ENCODE measurements at regions of chr3 and their contacts with region 1.

Region 1: GRCh38 chr3:133661454-133662277 is at the start of gene TOPBP1:
- DNase-seq: peak; percentile 85 to 87
- H3K4me3 ChIP-seq: peak within 1 kb of the TSS; percentile 78
- H3K4me3 Mint-ChIP-seq: peak within 1 kb of the TSS; percentile 80
- H3K27ac Mint-ChIP-seq: peak within 1 kb of the TSS; percentile 80
- H3K4me1 ChIP-seq: peaks cover 24% of the 10 kb centered on the region
- H3K4me1 Mint-ChIP-seq: peaks cover 15% of the 10 kb centered on the region
- H3K27me3 ChIP-seq: no peaks in the 10 kb centered on the region
- H3K27me3 Mint-ChIP-seq: no peaks in the 10 kb centered on the region
- CTCF ChIP-seq: no peak
- total RNA-seq, gene TOPBP1: 57.1 and 68.2 TPM in 2 replicates

Region 2: DNA sequence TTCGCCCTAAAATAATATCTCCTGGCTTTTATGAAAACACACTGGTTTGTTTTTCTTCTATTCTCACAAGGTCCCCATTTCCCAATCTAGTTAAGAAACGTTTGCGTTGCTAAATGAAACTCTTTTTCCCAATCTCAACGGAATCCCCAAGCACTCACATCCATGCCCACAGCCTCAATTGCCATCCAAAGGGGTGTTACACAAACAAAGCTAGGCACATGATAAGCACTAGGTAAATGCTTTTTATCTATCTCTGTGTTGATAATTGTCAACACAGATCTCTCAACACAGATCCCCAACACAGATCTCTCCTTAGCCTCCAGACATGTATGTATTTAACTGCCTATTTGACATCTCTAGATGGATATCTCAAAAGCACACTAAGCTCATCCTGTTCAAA is 49.4 kb after region 1 on chr3:
- CTCF ChIA-PET with region 1: no interaction called
- POLR2A ChIA-PET with region 1: no interaction called
- intact Hi-C with region 1: loop called (anchors 2 kb)
- DNase-seq: peak in 1 of 2 experiments; percentile 55
- H3K4me3 ChIP-seq: no peak overlapping the region
- H3K4me3 Mint-ChIP-seq: peak overlapping the region; percentile 10
- H3K27ac Mint-ChIP-seq: no peak overlapping the region
- H3K4me1 ChIP-seq: no peaks in the 10 kb centered on the region
- H3K4me1 Mint-ChIP-seq: peaks cover 19% of the 10 kb centered on the region
- H3K27me3 ChIP-seq: no peaks in the 10 kb centered on the region
- H3K27me3 Mint-ChIP-seq: no peaks in the 10 kb centered on the region
- CTCF ChIP-seq: no peak

Region 3: GRCh38 chr3:133742351-133743091 is 80.9 kb after region 1 on chr3:
- CTCF ChIA-PET with region 1: no interaction called
- POLR2A ChIA-PET with region 1: no interaction called
- intact Hi-C with region 1: loop called (anchors 2 kb)
- DNase-seq: peak; percentile 46 to 62
- H3K4me3 ChIP-seq: no peak overlapping the region
- H3K4me3 Mint-ChIP-seq: no peak overlapping the region
- H3K27ac Mint-ChIP-seq: no peak overlapping the region
- H3K4me1 ChIP-seq: peaks cover 16% of the 10 kb centered on the region; the same call in 1 of the 2 replicates
- H3K4me1 Mint-ChIP-seq: peaks cover 7% of the 10 kb centered on the region
- H3K27me3 ChIP-seq: no peaks in the 10 kb centered on the region
- H3K27me3 Mint-ChIP-seq: no peaks in the 10 kb centered on the region
- CTCF ChIP-seq: peak in 1 of 2 experiments; percentile 12

Region 4: GRCh38 chr3:133805527-133806475 is 144.1 kb after region 1 on chr3 and contains the start of gene SRPRB:
- CTCF ChIA-PET with region 1: no interaction called
- POLR2A ChIA-PET with region 1: no interaction called
- intact Hi-C with region 1: loop called (anchors 1 kb)
- DNase-seq: peak; percentile 95
- H3K4me3 ChIP-seq: peak within 1 kb of the TSS; percentile 60
- H3K4me3 Mint-ChIP-seq: peak within 1 kb of the TSS; percentile 93
- H3K27ac Mint-ChIP-seq: peak within 1 kb of the TSS; percentile 93
- H3K4me1 ChIP-seq: no peaks in the 10 kb centered on the region
- H3K4me1 Mint-ChIP-seq: peaks cover 8% of the 10 kb centered on the region
- H3K27me3 ChIP-seq: no peaks in the 10 kb centered on the region
- H3K27me3 Mint-ChIP-seq: no peaks in the 10 kb centered on the region
- CTCF ChIP-seq: no peak
- total RNA-seq, gene SRPRB: 83.0 and 87.3 TPM in 2 replicates

Region 5: DNA sequence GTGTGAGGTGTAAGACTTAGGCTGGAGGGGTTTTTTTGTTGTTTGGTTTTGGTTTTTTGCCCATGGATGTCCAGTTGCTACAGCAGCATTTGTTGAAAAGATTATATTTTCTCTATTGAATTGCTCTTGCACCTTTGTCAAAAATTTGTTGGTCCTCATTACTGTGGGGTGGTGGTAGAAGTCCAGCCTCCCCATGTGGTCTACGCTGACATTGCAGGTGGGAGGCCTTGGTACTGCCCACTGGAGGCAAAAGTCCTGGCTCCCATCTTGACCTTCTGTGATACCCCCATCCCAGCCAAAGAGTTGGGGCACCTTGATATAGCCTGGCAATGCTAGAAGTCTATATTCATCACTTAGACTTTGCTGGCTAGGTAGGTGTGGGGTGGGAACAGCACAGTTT is 239.4 kb after region 1 on chr3:
- CTCF ChIA-PET with region 1: no interaction called
- POLR2A ChIA-PET with region 1: no interaction called
- intact Hi-C with region 1: loop called (anchors 10 kb)
- DNase-seq: no peak
- H3K4me3 ChIP-seq: no peak overlapping the region
- H3K4me3 Mint-ChIP-seq: no peak overlapping the region
- H3K27ac Mint-ChIP-seq: no peak overlapping the region
- H3K4me1 ChIP-seq: 0 out of 2 replicates have a peak, but pooled peaks cover 2% of the 10 kb centered on the region
- H3K4me1 Mint-ChIP-seq: no peaks in the 10 kb centered on the region
- H3K27me3 ChIP-seq: peaks cover 5% of the 10 kb centered on the region
- H3K27me3 Mint-ChIP-seq: peaks cover 18% of the 10 kb centered on the region
- CTCF ChIP-seq: peak in 1 of 2 experiments; percentile 47

Region 6: GRCh38 chr3:134542287-134542958 is 880.8 kb after region 1 on chr3:
- CTCF ChIA-PET with region 1: no interaction called
- POLR2A ChIA-PET with region 1: no interaction called
- intact Hi-C with region 1: no loop called
- DNase-seq: no peak
- H3K4me3 ChIP-seq: no peak overlapping the region
- H3K4me3 Mint-ChIP-seq: no peak overlapping the region
- H3K27ac Mint-ChIP-seq: no peak overlapping the region
- H3K4me1 ChIP-seq: no peaks in the 10 kb centered on the region
- H3K4me1 Mint-ChIP-seq: no peaks in the 10 kb centered on the region
- H3K27me3 ChIP-seq: no peaks in the 10 kb centered on the region
- H3K27me3 Mint-ChIP-seq: no peaks in the 10 kb centered on the region
- CTCF ChIP-seq: no peak

Measured in Caco-2 (cell line).